ENCODE measurements at regions of chr17 and their contacts with region 1.

Region 1: DNA sequence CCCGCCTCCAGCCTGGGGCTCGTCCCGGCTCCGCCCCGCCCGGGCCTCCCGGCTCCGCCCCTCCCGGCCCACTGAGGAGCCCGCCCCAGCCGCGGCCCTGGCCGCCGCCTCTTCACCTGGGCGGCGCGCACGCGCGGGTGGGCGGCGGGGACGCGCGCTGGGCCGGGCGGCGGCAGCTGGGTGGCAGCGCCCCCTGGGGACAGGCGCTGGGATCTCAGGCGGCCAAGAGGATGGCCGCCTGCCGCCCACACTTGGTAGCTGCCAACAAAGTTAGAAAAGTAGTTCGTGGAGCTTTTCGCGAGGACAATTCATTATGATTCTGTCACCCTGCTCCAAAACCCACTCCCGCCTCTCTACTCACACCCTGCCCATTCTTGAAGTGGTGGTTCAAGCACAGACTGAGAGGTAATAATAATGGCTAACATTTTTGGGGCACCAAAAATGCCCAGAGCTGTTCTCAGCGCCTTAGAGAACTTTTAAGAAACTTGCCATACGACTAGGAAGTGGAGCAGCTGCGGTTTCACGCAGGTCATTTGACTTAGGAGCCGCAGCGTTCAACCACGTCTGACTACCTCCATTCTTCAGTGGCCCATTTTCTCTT is 340 bp upstream of the MYO1D start:
- DNase-seq: peak; percentile 23
- H3K4me3 ChIP-seq: peak overlapping the region; percentile 64
- H3K27ac ChIP-seq: no peak overlapping the region
- H3K27me3 ChIP-seq: peaks cover 9% of the 10 kb centered on the region
- CTCF ChIP-seq: peak; percentile 81

Region 2: DNA sequence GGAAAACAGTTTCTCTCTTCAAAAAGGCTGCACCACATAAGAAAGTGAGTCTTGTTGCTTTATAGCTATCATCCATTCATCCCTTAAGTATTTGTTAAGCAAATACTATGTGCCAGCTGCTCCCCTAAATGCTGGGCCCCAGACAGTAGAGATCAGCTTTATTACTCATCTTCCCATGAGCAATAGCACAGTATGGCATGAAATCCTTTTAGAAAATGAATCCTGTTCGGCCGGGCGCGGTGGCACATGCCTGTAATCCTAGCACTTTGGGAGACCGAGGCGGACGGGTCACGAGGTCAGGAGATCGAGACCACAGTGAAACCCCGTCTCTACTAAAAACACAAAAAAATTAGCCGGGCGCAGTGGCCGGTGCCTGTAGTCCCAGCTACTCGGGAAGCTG is 99.8 kb before region 1 on chr17:
- CTCF ChIA-PET with region 1: interaction called, 72 read pairs
- POLR2A ChIA-PET with region 1: no interaction called
- DNase-seq: no peak
- H3K4me3 ChIP-seq: no peak overlapping the region
- H3K27ac ChIP-seq: no peak overlapping the region
- H3K27me3 ChIP-seq: no peaks in the 10 kb centered on the region
- CTCF ChIP-seq: no peak

Region 3: GRCh38 chr17:32859857-32860525 is 17.3 kb before region 1 on chr17:
- CTCF ChIA-PET with region 1: interaction called, 18 read pairs
- POLR2A ChIA-PET with region 1: no interaction called
- DNase-seq: no peak
- H3K4me3 ChIP-seq: no peak overlapping the region
- H3K27ac ChIP-seq: no peak overlapping the region
- H3K27me3 ChIP-seq: no peaks in the 10 kb centered on the region
- CTCF ChIP-seq: no peak

Region 4: DNA sequence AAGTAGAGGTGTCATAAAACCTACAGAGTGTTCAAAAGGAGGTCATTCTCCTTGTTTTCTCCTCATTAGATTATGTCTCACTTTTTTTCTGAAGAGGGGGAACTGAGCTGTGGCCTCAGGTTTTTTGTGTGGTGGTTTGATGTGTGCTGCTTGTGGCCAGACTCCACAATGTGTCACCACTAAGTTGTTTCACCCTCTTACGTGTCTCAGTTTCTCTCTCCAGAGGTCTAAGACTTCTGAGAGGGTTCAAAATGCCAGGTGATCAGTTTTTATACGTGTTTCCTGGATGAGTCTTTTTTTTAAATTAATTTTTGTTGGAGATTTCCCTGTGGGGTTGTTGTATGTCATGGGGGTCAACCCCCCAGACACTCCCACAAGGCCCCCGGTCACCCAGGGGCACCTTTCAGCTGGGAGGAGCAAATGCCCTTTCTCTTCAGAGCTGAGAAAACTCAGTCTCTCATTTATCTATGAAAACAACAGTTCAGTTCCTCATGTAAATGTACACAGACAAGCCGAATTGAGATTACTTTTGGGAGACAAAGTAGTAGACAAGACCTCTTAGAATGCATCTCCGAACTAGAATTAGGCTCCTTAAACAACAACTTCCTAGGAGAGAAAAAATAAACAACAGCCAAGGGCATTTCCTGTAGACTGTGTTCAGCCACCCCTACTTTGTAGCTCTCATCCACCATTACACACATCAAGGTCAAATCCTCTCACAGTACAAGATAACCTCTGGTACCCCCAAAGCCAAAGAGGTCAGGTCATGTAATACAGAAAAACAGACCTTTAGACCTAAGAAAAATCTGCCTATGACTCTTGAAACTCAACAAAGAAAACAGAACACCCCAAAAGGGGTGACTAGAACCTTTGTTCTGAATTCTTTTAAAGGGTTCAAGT is 26.8 kb after region 1 on chr17:
- CTCF ChIA-PET with region 1: interaction called, 14 read pairs
- POLR2A ChIA-PET with region 1: no interaction called
- DNase-seq: no peak
- H3K4me3 ChIP-seq: no peak overlapping the region
- H3K27ac ChIP-seq: no peak overlapping the region
- H3K27me3 ChIP-seq: no peaks in the 10 kb centered on the region
- CTCF ChIP-seq: no peak

Region 5: GRCh38 chr17:32921017-32921416 is 43.8 kb after region 1 on chr17:
- CTCF ChIA-PET with region 1: interaction called, 11 read pairs
- POLR2A ChIA-PET with region 1: no interaction called
- DNase-seq: no peak
- H3K4me3 ChIP-seq: no peak overlapping the region
- H3K27ac ChIP-seq: no peak overlapping the region
- H3K27me3 ChIP-seq: no peaks in the 10 kb centered on the region
- CTCF ChIP-seq: no peak

Region 6: DNA sequence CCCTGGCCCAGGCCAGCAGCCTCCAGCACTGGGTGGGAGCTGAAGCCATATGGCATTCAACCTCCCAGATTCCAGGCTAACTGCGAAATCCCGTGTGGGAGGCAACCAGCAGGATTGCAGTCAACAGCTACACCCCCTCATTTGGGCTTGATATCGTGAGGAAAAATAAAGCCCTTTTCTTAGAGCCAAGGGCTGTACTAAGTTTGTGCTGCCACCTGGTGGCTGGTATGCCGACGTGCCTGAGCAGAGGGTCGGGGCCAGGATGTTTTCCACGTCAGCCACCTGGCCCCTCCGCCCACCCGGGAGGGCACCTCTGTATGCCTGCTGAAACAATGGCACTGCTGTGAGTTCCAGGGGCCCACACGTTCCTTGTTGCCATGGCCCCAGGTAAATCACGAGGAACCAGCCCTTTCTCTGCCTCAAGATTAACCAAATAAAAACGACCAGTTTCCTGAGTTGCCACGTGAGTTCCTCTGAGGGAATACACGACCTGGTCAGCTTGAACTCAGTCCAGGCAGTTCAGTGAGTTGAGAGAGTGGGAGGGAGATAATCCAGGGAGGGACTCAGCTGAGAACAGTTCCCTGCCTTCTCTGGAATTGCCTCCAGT is 59.7 kb after region 1 on chr17:
- CTCF ChIA-PET with region 1: interaction called, 44 read pairs
- POLR2A ChIA-PET with region 1: no interaction called
- DNase-seq: peak; percentile 42
- H3K4me3 ChIP-seq: no peak overlapping the region
- H3K27ac ChIP-seq: peak overlapping the region; percentile 39
- H3K27me3 ChIP-seq: no peaks in the 10 kb centered on the region
- CTCF ChIP-seq: peak; percentile 76